Sciatic nerve (tissue), 2 donors: ENCODE measurements at regions of chr12 and their contacts with region 1.

Region 1: GRCh38 chr12:48183091-48183875 is at the start of gene CCDC184:
- DNase-seq: peak; percentile 79
- ATAC-seq: peak; percentile 90
- total RNA-seq, gene CCDC184: 6.1 TPM

Region 2: DNA sequence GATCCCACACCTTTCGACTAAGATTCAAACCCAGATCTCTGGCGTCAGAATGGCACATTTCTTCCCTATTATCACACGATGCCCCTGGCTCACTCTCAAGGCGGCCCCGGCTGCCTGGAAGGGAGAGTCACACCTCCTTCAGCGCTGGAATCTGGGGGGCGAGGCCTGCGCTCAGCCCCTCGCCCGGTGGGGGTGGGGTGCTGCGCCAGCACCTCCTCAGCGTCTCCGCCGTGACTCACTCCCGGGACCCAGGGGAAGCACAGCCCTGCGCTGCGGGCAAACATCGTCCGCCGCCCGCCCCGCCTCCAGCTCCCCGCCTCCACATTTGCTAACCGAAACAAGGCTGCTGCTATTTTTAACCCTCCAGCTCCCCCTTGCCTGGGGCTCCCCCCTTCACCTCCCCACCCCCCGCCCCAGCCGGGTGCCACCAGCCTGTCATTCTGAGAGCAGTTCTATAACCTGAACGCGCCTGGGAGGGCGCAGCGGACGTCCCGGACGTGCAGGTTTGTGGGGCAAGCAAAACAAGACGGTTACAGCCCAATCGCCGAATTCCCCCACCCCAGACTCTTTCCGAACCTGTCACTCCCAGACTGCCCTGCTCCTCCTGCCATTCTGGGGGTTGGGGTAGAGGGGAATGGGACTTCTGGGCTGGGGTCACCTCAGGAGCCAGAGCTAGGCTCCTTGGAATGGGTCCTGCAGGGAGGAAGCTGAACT is 370.3 kb before region 1 on chr12:
- intact Hi-C with region 1: no loop called
- DNase-seq: peak; percentile 91
- ATAC-seq: peak; percentile 85

Region 3: GRCh38 chr12:48061948-48062719 is 121.1 kb before region 1 on chr12:
- intact Hi-C with region 1: no loop called
- DNase-seq: no peak
- ATAC-seq: no peak

Region 4: GRCh38 chr12:48157018-48157888 is 26.0 kb before region 1 on chr12 and contains the start of gene ASB8:
- intact Hi-C with region 1: no loop called
- DNase-seq: peak; percentile 99
- ATAC-seq: peak; percentile 100
- total RNA-seq, gene ASB8: 36.0 TPM

Region 5: GRCh38 chr12:50120521-50120920 is 1937.2 kb after region 1 on chr12:
- intact Hi-C with region 1: loop called (anchors 5 kb)
- DNase-seq: no peak
- ATAC-seq: no peak